Calu3 (cell line): ENCODE measurements at regions of chr4 and their contacts with region 1.

Region 1: GRCh38 chr4:3106339-3107186 is 32.1 kb downstream of the HTT start:
- DNase-seq: peak; percentile 88
- H3K4me3 Mint-ChIP-seq: no peak overlapping the region
- H3K27ac Mint-ChIP-seq: no peak overlapping the region
- H3K4me1 Mint-ChIP-seq: no peaks in the 10 kb centered on the region
- H3K27me3 Mint-ChIP-seq: no peaks in the 10 kb centered on the region
- CTCF ChIP-seq: peak; percentile 74

Region 2: DNA sequence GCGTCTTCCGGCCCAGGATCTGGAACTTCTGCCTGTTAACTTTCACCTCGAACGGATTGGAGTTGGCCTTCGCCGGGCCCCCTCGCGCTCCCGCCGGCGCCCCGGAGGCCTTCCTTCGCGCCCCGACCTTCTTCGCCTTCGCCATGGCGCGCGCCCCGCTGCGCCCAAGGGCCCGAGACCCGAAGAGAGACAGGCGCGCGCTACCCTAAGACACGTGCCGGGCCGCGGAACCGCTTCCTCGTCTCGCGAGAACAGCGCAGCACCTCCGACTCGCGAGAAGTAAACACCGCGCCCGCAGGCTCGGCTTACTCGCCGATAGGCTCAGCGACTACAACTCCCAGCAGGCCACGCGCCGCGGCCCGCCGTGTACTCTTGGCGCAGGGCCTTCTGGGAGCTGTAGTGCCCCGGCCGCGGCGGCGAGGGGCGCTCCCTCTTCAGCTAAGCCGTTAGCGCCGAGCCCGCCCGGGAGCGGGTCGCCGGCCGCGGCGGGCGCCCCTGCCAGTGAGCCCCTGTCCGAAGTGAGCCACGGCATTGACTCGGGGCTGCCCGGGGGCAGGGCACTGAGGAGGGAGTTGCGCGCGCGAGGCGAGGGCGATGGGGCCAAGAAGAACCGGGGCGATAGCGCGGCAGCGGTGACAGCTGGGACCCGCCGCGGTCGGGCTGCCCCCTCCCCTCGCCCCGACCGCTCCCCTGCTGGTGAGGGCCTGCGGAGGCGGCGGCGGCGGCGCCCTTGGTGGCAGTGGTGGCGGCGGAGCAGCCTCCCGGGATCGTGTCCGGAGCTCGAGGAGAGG is 143.2 kb before region 1 on chr4 and contains the starts of genes GRK4 and NOP14:
- CTCF ChIA-PET with region 1: no interaction called
- intact Hi-C with region 1: no loop called
- DNase-seq: peak; percentile 92
- H3K4me3 Mint-ChIP-seq: peak within 1 kb of the TSS; percentile 79
- H3K27ac Mint-ChIP-seq: peak within 1 kb of the TSS; percentile 23
- H3K4me1 Mint-ChIP-seq: no peaks in the 10 kb centered on the region
- H3K27me3 Mint-ChIP-seq: peaks cover 9% of the 10 kb centered on the region
- CTCF ChIP-seq: no peak
- total RNA-seq, gene GRK4: 0.80 and 1.1 TPM in 2 replicates
- total RNA-seq, gene NOP14: 29.1 and 29.4 TPM in 2 replicates

Region 3: DNA sequence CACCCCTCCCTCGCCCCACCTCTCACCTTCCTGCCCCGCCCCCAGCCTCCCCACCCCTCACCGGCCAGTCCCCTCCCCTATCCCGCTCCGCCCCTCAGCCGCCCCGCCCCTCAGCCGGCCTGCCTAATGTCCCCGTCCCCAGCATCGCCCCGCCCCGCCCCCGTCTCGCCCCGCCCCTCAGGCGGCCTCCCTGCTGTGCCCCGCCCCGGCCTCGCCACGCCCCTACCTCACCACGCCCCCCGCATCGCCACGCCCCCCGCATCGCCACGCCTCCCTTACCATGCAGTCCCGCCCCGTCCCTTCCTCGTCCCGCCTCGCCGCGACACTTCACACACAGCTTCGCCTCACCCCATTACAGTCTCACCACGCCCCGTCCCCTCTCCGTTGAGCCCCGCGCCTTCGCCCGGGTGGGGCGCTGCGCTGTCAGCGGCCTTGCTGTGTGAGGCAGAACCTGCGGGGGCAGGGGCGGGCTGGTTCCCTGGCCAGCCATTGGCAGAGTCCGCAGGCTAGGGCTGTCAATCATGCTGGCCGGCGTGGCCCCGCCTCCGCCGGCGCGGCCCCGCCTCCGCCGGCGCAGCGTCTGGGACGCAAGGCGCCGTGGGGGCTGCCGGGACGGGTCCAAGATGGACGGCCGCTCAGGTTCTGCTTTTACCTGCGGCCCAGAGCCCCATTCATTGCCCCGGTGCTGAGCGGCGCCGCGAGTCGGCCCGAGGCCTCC is 32.3 kb before region 1 on chr4 and contains the starts of genes HTT and HTT-AS:
- CTCF ChIA-PET with region 1: no interaction called
- intact Hi-C with region 1: no loop called
- DNase-seq: peak; percentile 92
- H3K4me3 Mint-ChIP-seq: peak within 1 kb of the TSS; percentile 95
- H3K27ac Mint-ChIP-seq: peak within 1 kb of the TSS; percentile 44
- H3K4me1 Mint-ChIP-seq: peaks cover 9% of the 10 kb centered on the region
- H3K27me3 Mint-ChIP-seq: peaks cover 14% of the 10 kb centered on the region
- CTCF ChIP-seq: no peak
- total RNA-seq, gene HTT: 34.6 and 44.4 TPM in 2 replicates
- total RNA-seq, gene HTT-AS: not detected in 2 replicates

Region 4: DNA sequence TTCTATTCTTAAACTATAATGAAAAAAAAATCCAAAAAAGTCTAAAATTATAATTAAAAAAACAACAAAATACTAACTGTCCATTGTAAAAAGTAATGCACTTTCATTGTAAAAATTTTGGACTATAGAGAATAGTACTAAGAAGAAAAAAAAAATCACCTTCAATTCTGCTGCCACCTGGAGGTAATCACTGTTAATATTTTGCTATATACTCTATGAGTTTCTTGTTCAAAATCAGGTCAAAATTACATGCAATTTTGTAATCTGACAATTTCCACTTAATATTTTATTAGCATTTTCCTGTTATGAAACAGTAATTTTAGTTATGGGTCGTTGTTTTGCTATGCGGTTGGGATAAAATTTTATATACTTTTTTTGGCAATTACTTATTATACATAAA is 29.9 kb after region 1 on chr4:
- CTCF ChIA-PET with region 1: no interaction called
- intact Hi-C with region 1: loop called (anchors 2 kb)
- DNase-seq: no peak
- H3K4me3 Mint-ChIP-seq: no peak overlapping the region
- H3K27ac Mint-ChIP-seq: no peak overlapping the region
- H3K4me1 Mint-ChIP-seq: no peaks in the 10 kb centered on the region
- H3K27me3 Mint-ChIP-seq: no peaks in the 10 kb centered on the region
- CTCF ChIP-seq: no peak